H1 (cell line): ENCODE measurements at regions of chr22 and their contacts with region 1.

Region 1: GRCh38 chr22:19275919-19276600 is 15.5 kb downstream of the CLTCL1 start:
- DNase-seq: peak in 1 of 2 experiments; percentile 24
- H3K4me3 ChIP-seq: no peak overlapping the region
- H3K27ac ChIP-seq: no peak overlapping the region
- H3K4me1 ChIP-seq: peaks cover 0 to 3% (median 1%) of the 10 kb centered on the region in 4 experiments; a peak in 2 of 7 replicates
- H3K27me3 ChIP-seq: no peaks in the 10 kb centered on the region
- CTCF ChIP-seq: no peak
- EP300 ChIP-seq: no peak
- POLR2A ChIP-seq: no peak
- RAD21 ChIP-seq: no peak

Region 2: DNA sequence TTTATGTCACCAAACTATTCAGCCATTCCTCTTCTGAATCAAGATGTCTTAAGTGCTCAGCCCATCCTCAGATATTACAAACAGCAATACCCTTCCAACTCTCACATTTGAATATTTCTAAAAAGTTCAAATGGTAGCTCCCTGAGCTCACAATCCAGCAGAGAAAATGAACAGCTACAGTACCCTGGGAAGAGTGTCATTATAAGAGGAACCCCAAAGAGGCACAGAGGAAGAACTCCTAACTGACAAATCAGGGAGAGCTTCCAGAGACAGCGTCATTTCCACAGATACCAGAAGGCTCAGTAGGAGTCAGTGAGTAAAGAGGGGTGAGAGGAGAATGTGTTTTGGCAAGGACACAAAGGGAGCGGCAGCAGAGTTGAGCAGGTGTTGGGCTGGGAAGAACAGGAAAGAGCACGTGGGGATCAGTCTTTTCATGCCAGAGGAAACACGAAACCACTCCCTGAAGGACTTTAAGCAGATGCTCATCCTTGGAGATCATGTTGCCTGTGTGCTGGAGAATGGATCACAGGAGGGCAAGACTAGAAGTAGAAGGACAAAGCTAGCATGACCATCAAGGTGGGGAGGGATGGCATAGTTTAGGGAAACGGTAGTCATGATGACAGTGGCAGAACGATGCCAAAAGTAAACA is 11.1 kb after region 1 on chr22:
- CTCF ChIA-PET with region 1: interaction called, 11 read pairs
- POLR2A ChIA-PET with region 1: interaction called, 3 read pairs
- DNase-seq: no peak
- H3K4me3 ChIP-seq: no peak overlapping the region; a peak in 1 of 8 replicates
- H3K27ac ChIP-seq: no peak overlapping the region
- H3K4me1 ChIP-seq: peaks cover 10 to 27% (median 22%) of the 10 kb centered on the region in 4 experiments
- H3K27me3 ChIP-seq: peaks cover 0 to 5% (median 2%) of the 10 kb centered on the region in 4 experiments; a peak in 3 of 7 replicates
- CTCF ChIP-seq: no peak
- EP300 ChIP-seq: no peak
- POLR2A ChIP-seq: no peak
- RAD21 ChIP-seq: no peak